K562 (cell line): ENCODE measurements at regions of chr7 and their contacts with region 1.

Region 1: GRCh38 chr7:116929914-116930913 is 23.1 kb upstream of the ST7 start:
- DNase-seq: peak; percentile 84 to 94 (median 86)
- ATAC-seq: peak; percentile 92
- H3K4me3 ChIP-seq: no peak overlapping the region
- H3K27ac ChIP-seq: no peak overlapping the region
- H3K4me1 ChIP-seq: peaks cover 0 to 2% of the 10 kb centered on the region in 2 experiments; a peak in 1 of 5 replicates
- H3K27me3 ChIP-seq: 0 out of 5 replicates have a peak, but pooled peaks cover 0 to 2% of the 10 kb centered on the region in 2 experiments
- CTCF ChIP-seq: peak; percentile 96 to 99 (median 98)
- EP300 ChIP-seq: no peak
- POLR2A ChIP-seq: no peak
- RAD21 ChIP-seq: peak; percentile 98

Region 2: DNA sequence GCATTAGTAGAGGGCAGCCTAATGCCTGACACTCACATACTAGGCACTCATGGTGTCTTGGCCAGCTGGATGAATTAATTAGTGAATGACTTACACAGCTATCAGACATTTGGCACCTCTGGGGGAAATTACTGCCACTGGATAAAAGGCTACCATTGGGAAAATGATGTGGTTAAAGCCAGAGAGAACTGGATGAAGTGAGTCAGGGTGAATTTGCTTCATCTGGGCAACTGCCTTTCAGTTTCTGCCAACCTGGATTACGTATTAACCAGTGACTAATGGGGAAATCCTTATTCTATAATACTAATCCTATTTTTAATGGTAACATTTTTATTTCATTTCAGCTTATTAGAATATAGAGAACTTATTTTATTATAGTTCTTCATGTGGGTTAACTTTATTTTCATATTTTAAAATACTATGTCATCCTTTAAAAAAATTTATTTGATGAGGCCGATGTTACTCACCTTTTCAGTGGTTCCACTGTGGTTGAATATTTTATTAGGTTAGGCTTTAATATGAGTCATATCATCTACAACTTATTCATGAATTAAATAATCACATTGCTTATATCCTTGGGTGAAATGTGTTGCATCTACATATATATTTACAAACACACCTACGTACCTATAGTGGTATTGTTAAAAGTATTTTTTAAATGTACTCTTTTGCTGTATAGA is 153.5 kb before region 1 on chr7:
- CTCF ChIA-PET with region 1: no interaction called
- POLR2A ChIA-PET with region 1: no interaction called
- in situ Hi-C with region 1: no loop called
- intact Hi-C with region 1: no loop called
- DNase-seq: no peak
- ATAC-seq: no peak
- H3K4me3 ChIP-seq: no peak overlapping the region
- H3K27ac ChIP-seq: no peak overlapping the region
- H3K4me1 ChIP-seq: no peaks in the 10 kb centered on the region
- H3K27me3 ChIP-seq: peaks cover 4 to 6% of the 10 kb centered on the region in 2 experiments; a peak in 1 of 5 replicates
- CTCF ChIP-seq: no peak
- EP300 ChIP-seq: no peak
- POLR2A ChIP-seq: no peak
- RAD21 ChIP-seq: no peak

Region 3: GRCh38 chr7:116828281-116828680 is 101.9 kb before region 1 on chr7:
- CTCF ChIA-PET with region 1: no interaction called
- POLR2A ChIA-PET with region 1: no interaction called
- in situ Hi-C with region 1: no loop called
- intact Hi-C with region 1: loop called (anchors 5 kb)
- DNase-seq: no peak
- ATAC-seq: peak; percentile 67
- H3K4me3 ChIP-seq: no peak overlapping the region
- H3K27ac ChIP-seq: no peak overlapping the region
- H3K4me1 ChIP-seq: no peaks in the 10 kb centered on the region
- H3K27me3 ChIP-seq: peaks cover 4 to 18% of the 10 kb centered on the region in 2 experiments; a peak in 3 of 5 replicates
- CTCF ChIP-seq: peak; percentile 35 to 59 (median 46); a peak in 3 of 6 replicates
- EP300 ChIP-seq: no peak
- POLR2A ChIP-seq: no peak
- RAD21 ChIP-seq: peak in 1 of 2 experiments; percentile 36; a peak in 2 of 4 replicates

Region 4: DNA sequence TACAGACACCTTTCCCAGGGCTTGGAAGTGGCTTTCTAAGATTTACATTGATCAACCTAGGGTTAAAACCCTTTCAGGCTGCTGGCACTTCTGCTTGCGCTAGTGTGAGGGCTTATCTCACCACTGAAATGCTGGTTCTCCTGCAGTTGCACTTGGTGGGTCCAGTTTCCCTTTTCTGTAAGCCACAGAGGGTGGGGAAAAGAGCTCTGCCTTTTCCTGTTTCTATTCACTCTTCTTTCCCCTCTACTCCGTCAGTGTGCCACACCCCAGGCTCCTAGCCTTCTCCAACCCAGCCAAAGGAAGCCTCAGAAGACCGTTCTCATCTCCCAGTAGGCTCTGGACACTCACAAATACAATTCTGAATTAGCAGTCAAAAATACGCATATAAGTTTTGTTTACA is 86.8 kb before region 1 on chr7:
- CTCF ChIA-PET with region 1: no interaction called
- POLR2A ChIA-PET with region 1: no interaction called
- in situ Hi-C with region 1: no loop called
- intact Hi-C with region 1: no loop called
- DNase-seq: peak in 1 of 4 experiments; percentile 29
- ATAC-seq: peak; percentile 65
- H3K4me3 ChIP-seq: no peak overlapping the region; the same call in 1 of the 2 replicates
- H3K27ac ChIP-seq: no peak overlapping the region
- H3K4me1 ChIP-seq: peaks cover 0 to 12% of the 10 kb centered on the region in 2 experiments; a peak in 2 of 5 replicates
- H3K27me3 ChIP-seq: peaks cover 7 to 16% of the 10 kb centered on the region in 2 experiments
- CTCF ChIP-seq: no peak
- EP300 ChIP-seq: no peak
- POLR2A ChIP-seq: no peak
- RAD21 ChIP-seq: no peak

Region 5: DNA sequence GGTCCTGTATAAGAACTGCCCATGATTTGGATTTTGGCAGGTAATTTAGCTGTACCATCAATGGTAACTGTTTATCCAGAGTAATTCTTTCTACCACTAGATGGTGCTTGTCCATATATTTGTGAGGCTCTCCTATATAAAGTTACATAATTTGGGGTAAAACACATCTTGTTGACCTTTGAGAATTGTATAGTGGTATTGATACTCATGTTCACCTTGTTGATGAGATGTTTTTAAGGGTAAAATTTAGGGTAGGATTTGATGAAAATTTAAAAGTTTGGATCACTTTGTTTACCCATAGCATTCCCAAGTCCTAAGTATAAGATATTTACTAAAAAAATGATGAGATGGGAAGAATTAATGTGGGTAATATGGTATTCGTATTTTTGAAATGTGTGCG is 54.7 kb after region 1 on chr7:
- CTCF ChIA-PET with region 1: interaction called, 14 read pairs
- POLR2A ChIA-PET with region 1: interaction called, 4 read pairs
- in situ Hi-C with region 1: no loop called
- intact Hi-C with region 1: loop called (anchors 1 kb)
- DNase-seq: peak; percentile 58 to 69 (median 66)
- ATAC-seq: peak; percentile 83
- H3K4me3 ChIP-seq: no peak overlapping the region
- H3K27ac ChIP-seq: no peak overlapping the region
- H3K4me1 ChIP-seq: no peaks in the 10 kb centered on the region; a peak in 1 of 5 replicates
- H3K27me3 ChIP-seq: no peaks in the 10 kb centered on the region
- CTCF ChIP-seq: peak; percentile 67 to 86 (median 71)
- EP300 ChIP-seq: no peak
- POLR2A ChIP-seq: no peak
- RAD21 ChIP-seq: peak; percentile 86 to 90

Region 6: DNA sequence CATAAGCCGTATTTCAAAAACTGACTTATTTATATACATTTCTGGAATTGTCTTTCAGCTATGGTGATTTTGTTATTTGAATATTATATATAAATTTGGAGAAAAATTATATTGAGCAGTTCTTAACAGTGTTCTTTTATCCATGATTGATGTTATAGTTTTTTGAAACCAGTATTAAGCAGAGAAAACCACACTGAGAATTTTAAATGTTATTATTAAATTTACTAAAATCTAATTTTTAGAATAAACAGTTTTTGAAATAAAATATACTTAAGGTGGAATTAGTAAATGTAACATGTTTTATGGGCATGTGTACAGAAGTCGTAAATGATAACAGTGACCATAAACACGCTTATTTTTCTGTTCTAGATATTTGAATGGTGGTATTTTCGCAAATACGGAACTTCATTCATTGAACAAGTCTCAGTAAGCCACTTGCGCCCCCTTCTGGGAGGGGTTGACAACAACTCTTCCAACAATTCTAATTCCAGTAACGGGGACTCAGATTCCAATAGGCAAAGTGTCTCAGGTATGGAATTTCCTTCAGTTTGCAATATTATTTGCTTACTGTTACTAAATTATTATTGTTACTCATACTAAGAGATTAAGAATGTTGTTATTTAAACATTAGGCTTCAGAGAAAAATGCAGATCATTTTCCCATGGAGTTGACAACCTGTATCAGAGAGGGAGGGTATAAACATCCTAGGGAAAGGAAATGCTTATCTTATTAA is 189.1 kb after region 1 on chr7:
- CTCF ChIA-PET with region 1: interaction called, 63 read pairs
- POLR2A ChIA-PET with region 1: interaction called, 3 read pairs
- in situ Hi-C with region 1: loop called (anchors 5 kb)
- intact Hi-C with region 1: loop called (anchors 1 kb)
- DNase-seq: peak; percentile 60 to 94 (median 66)
- ATAC-seq: peak; percentile 82
- H3K4me3 ChIP-seq: no peak overlapping the region
- H3K27ac ChIP-seq: no peak overlapping the region
- H3K4me1 ChIP-seq: peaks cover 0 to 8% of the 10 kb centered on the region in 2 experiments; a peak in 3 of 5 replicates
- H3K27me3 ChIP-seq: no peaks in the 10 kb centered on the region
- CTCF ChIP-seq: peak; percentile 90 to 98 (median 92)
- EP300 ChIP-seq: 0 out of 2 replicates have a peak, but pooled peaks have one; percentile 2
- POLR2A ChIP-seq: no peak
- RAD21 ChIP-seq: peak; percentile 99

Region 7: GRCh38 chr7:117385340-117386109 is 455.3 kb after region 1 on chr7:
- CTCF ChIA-PET with region 1: no interaction called
- POLR2A ChIA-PET with region 1: no interaction called
- in situ Hi-C with region 1: no loop called
- intact Hi-C with region 1: loop called (anchors 2 kb)
- DNase-seq: no peak
- ATAC-seq: peak; percentile 78
- H3K4me3 ChIP-seq: no peak overlapping the region
- H3K27ac ChIP-seq: no peak overlapping the region
- H3K4me1 ChIP-seq: no peaks in the 10 kb centered on the region
- H3K27me3 ChIP-seq: no peaks in the 10 kb centered on the region
- CTCF ChIP-seq: peak in 2 of 3 experiments; percentile 19 to 53; a peak in 2 of 6 replicates
- EP300 ChIP-seq: no peak
- POLR2A ChIP-seq: no peak
- RAD21 ChIP-seq: peak; percentile 45 to 77; a peak in 3 of 4 replicates